Activated T-helper 2 cell treated with anti-CD3 and anti-CD28 coated beads, Interferon-gamma antibody, Interleukin-2, Interleukin-4, amounts not matched to agents 10 μg/mL and 5 μg/mL and 100 μg/mL, durations not matched to agents 14 hours and 24 hours and 36 hours (primary cell): ENCODE measurements at regions of chr6 and their contacts with region 1.

Region 1: GRCh38 chr6:129251669-129252376 is 368.9 kb downstream of the LAMA2 start:
- DNase-seq: peak; percentile 28
- H3K4me3 Mint-ChIP-seq: no peak overlapping the region
- H3K27ac Mint-ChIP-seq: no peak overlapping the region
- H3K4me1 Mint-ChIP-seq: peaks cover 6% of the 10 kb centered on the region
- H3K27me3 Mint-ChIP-seq: peaks cover 25% of the 10 kb centered on the region

Region 2: DNA sequence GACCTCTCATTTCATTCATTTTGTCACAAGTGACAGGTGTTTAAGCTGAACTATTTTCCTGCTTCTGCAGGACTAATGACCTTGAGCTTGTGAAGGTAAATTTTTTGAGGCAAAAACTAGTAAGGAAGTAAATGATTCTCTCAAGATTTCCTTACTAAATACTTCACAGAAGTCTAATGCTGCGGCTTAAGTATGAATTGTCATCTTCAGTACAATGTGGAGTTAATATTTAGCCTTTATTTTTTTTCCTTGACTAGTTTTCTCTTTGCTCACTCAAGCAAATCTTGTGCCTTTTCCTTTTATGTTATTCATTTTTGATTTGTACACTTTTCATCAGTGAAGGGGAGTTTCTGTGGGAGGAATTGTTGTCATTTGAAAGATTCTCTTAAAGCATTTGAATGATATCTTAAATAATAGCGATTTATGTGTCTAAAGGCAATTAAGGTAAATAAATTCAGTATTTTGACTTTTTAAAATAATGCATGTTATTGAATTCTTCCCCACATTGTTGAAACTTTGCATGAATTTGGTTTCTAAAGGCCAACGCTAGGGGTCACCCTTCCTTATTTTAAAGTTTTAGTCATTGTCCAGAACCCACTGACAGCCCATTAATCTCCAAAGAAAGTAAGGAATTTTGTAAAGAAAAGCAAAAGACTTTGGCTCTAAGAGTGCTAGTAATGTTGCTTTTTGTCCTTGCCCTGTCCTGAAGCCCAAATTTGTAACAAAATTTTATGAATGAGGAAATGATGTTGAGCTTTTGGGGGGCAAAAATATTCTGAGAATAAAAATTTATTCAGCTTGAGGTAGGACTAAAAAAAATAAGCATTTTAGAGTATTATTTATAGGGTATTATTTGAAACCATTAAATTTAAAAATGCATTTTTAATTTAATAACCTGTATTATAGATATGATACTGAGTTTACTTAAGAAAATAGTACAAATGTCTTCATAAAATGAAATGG is 526.3 kb before region 1 on chr6:
- intact Hi-C with region 1: loop called (anchors 1 kb)
- DNase-seq: no peak
- H3K4me3 Mint-ChIP-seq: no peak overlapping the region
- H3K27ac Mint-ChIP-seq: no peak overlapping the region
- H3K4me1 Mint-ChIP-seq: no peaks in the 10 kb centered on the region
- H3K27me3 Mint-ChIP-seq: peaks cover 19% of the 10 kb centered on the region

Region 3: DNA sequence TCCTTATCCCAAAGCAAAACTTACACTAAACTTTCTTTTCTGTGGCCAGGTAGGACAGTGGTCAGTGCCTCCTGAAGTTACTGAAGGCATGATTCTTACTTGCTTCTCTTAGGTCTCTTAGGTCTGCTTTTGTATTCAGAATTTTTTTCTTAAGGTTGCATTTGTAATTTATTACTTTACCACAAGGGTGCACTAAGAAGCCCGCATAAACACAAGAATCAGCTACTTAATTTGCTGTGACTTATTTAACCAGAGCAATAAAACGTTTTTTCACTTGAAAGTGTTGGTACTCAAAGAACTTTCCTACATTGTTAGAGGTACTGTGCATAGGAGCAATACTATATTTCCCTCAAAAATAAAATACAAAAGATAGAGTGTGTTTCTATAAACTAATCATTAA is 444.2 kb before region 1 on chr6:
- intact Hi-C with region 1: loop called (anchors 5 kb)
- DNase-seq: no peak
- H3K4me3 Mint-ChIP-seq: no peak overlapping the region
- H3K27ac Mint-ChIP-seq: no peak overlapping the region
- H3K4me1 Mint-ChIP-seq: no peaks in the 10 kb centered on the region
- H3K27me3 Mint-ChIP-seq: no peaks in the 10 kb centered on the region

Region 4: DNA sequence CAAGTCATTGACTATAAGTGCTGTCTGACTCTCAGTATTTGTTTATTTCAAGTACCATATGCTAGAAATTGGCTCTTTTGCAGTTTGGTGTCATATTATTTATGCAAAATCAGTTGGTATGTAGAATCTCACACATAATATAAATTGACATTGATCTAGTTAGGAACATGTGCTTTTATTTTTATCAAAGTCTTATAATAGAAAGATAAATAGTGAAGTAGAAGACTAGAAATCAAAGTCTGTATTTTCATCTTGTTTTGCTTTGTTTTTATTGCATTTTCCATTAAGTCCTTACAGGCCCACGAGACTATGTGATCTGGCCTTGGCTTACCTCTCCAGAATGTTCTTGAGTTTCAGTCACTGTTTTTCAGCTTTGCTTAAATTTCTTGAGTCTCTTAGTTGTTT is 68.6 kb before region 1 on chr6:
- intact Hi-C with region 1: no loop called
- DNase-seq: no peak
- H3K4me3 Mint-ChIP-seq: no peak overlapping the region
- H3K27ac Mint-ChIP-seq: no peak overlapping the region
- H3K4me1 Mint-ChIP-seq: no peaks in the 10 kb centered on the region
- H3K27me3 Mint-ChIP-seq: no peaks in the 10 kb centered on the region

Region 5: GRCh38 chr6:129284225-129284624 is 32.4 kb after region 1 on chr6:
- intact Hi-C with region 1: no loop called
- DNase-seq: no peak
- H3K4me3 Mint-ChIP-seq: no peak overlapping the region
- H3K27ac Mint-ChIP-seq: no peak overlapping the region
- H3K4me1 Mint-ChIP-seq: peaks cover 6% of the 10 kb centered on the region
- H3K27me3 Mint-ChIP-seq: no peaks in the 10 kb centered on the region